Endothelial cell of umbilical vein (primary cell): ENCODE measurements at regions of chr5 and their contacts with region 1.

Region 1: DNA sequence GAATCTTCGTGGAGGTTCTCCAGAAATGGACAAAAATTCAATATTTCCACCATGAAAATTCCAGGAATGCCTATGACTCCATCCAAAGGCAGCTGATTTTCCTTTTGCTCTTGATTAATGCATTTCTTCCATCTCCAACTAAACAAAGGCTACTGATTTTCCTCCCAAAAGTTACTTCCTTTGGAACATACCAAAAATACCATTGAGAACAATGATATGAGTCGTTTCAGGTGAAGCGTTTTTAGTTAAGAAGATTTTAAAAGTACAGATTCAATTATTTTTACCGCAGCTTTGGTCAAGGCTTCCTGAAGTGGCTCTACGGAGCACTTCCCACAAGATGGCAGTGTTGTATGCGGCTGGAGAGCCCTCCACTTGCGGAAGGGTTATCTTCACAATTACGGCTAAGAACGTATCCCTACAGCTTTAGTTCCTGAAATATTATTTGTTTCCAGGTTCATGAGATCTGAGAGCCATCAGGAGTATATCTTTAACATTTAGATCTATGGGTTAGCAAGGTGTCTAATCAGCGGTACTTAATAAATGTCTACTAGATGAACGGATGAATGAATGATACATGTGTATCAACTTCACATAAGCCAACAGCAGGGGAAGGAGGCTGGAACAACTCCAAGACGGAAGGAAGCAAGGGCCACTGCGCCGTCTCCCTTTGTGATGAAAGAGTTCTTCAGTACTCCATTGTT is 35.9 kb upstream of the ARSB start:
- DNase-seq: peak; percentile 80
- H3K4me3 ChIP-seq: peak overlapping the region in 1 of 3 experiments; percentile 40
- H3K27ac ChIP-seq: no peak overlapping the region
- H3K4me1 ChIP-seq: peaks cover 16% of the 10 kb centered on the region
- H3K27me3 ChIP-seq: peaks cover 2 to 14% of the 10 kb centered on the region in 2 experiments
- CTCF ChIP-seq: peak; percentile 73 to 78
- POLR2A ChIP-seq: no peak

Region 2: DNA sequence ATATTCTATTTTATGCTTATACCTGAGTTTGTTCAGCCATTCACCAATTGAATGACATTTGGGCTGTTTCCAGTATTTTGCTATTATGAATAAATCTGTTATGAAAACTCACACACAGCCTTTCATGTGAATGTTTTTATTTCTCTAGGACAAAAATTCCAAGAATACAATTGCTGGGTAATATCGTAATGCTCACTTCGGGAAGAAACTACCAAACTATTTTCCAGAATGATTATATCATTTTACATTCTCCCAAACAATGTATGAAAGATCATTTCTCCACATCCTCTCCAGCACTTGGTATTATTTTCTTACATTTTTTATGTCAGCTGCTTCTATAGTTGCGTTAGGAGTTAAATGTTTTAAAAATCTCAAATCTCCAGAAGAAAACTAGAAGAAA is 314.2 kb before region 1 on chr5:
- CTCF ChIA-PET with region 1: no interaction called
- POLR2A ChIA-PET with region 1: no interaction called
- dilution Hi-C with region 1: no loop called
- intact Hi-C with region 1: no loop called
- DNase-seq: peak; percentile 32
- H3K4me3 ChIP-seq: no peak overlapping the region
- H3K27ac ChIP-seq: no peak overlapping the region
- H3K4me1 ChIP-seq: no peaks in the 10 kb centered on the region
- H3K27me3 ChIP-seq: no peaks in the 10 kb centered on the region
- CTCF ChIP-seq: no peak
- POLR2A ChIP-seq: no peak

Region 3: DNA sequence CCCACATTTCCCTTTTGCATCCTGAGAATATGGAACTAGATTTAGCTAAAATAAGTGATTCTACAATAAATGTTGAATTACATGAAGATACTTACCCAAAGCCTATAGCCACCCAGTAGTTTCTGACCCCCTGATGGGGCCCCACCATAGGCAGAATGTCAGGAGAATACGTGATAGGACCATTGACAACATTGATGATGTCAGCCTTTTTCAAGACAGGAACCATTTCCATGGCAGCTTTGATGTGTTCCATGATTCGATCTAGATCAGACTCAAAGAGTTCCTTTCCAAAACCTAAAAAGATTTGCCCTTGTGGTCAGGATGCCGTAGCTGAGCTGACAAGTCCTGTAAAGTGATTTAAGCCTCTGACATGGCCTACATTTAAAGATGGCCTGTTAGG is 21.2 kb after region 1 on chr5:
- CTCF ChIA-PET with region 1: interaction called, 15 read pairs
- POLR2A ChIA-PET with region 1: no interaction called
- dilution Hi-C with region 1: no loop called
- intact Hi-C with region 1: no loop called
- DNase-seq: no peak
- H3K4me3 ChIP-seq: no peak overlapping the region
- H3K27ac ChIP-seq: no peak overlapping the region
- H3K4me1 ChIP-seq: no peaks in the 10 kb centered on the region
- H3K27me3 ChIP-seq: peaks cover 0 to 4% of the 10 kb centered on the region in 2 experiments
- CTCF ChIP-seq: no peak
- POLR2A ChIP-seq: no peak

Region 4: GRCh38 chr5:79109527-79110492 is 88.8 kb after region 1 on chr5:
- CTCF ChIA-PET with region 1: interaction called, 18 read pairs
- POLR2A ChIA-PET with region 1: no interaction called
- dilution Hi-C with region 1: no loop called
- intact Hi-C with region 1: loop called (anchors 1 kb)
- DNase-seq: no peak
- H3K4me3 ChIP-seq: no peak overlapping the region
- H3K27ac ChIP-seq: no peak overlapping the region
- H3K4me1 ChIP-seq: no peaks in the 10 kb centered on the region
- H3K27me3 ChIP-seq: peaks cover 27 to 43% of the 10 kb centered on the region in 2 experiments
- CTCF ChIP-seq: peak; percentile 19 to 22
- POLR2A ChIP-seq: no peak

Region 5: DNA sequence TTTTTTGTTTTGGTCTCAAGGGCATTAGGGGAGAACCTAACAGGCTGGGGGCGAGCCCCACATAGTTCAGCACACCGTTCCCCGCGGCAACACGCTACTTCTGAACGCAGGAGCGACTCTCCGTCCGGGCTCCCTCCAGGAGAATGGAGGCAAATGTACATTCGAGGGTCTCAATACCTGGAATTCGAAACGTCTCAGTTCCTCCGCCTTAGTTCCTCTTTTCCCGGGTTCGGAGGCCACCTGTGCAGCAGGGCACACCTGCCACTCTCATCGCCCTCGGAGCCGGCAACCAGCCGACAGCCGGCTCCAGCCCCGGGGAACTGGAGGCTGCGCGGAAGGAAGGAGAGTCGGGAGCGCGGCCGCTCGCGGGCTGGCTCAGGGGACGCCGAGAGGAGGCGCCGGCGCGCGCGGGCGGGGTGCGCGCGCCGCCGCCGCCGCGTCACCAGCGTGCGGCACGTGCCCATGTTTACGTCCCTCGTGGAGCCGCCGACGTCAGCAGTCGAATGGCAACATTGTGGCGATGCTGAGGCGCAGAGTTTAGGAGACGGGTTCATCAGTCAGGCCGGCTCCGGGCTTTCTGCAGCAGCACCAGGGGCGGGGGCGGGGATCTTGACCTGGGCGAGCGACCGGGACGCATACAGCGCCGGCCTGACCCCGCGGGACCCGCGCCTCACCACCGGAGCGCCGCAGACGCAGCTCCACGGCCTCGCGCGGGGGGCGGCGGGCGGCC is 214.8 kb after region 1 on chr5 and contains the start of gene JMY:
- CTCF ChIA-PET with region 1: interaction called, 16 read pairs
- POLR2A ChIA-PET with region 1: no interaction called
- dilution Hi-C with region 1: no loop called
- intact Hi-C with region 1: loop called (anchors 5 kb)
- DNase-seq: peak; percentile 81
- H3K4me3 ChIP-seq: peak within 1 kb of the TSS; percentile 36 to 73 (median 64)
- H3K27ac ChIP-seq: peak within 1 kb of the TSS; percentile 54
- H3K4me1 ChIP-seq: peaks cover 10% of the 10 kb centered on the region
- H3K27me3 ChIP-seq: no peaks in the 10 kb centered on the region
- CTCF ChIP-seq: peak in 1 of 2 donors; percentile 22
- POLR2A ChIP-seq: peak; percentile 87
- total RNA-seq, gene JMY: 6.3 and 6.5 TPM in 2 replicates

Region 6: GRCh38 chr5:79318935-79319614 is 298.1 kb after region 1 on chr5:
- CTCF ChIA-PET with region 1: no interaction called
- POLR2A ChIA-PET with region 1: no interaction called
- dilution Hi-C with region 1: no loop called
- intact Hi-C with region 1: no loop called
- DNase-seq: peak; percentile 14
- H3K4me3 ChIP-seq: no peak overlapping the region
- H3K27ac ChIP-seq: no peak overlapping the region
- H3K4me1 ChIP-seq: no peaks in the 10 kb centered on the region
- H3K27me3 ChIP-seq: no peaks in the 10 kb centered on the region
- CTCF ChIP-seq: no peak
- POLR2A ChIP-seq: no peak

Region 7: DNA sequence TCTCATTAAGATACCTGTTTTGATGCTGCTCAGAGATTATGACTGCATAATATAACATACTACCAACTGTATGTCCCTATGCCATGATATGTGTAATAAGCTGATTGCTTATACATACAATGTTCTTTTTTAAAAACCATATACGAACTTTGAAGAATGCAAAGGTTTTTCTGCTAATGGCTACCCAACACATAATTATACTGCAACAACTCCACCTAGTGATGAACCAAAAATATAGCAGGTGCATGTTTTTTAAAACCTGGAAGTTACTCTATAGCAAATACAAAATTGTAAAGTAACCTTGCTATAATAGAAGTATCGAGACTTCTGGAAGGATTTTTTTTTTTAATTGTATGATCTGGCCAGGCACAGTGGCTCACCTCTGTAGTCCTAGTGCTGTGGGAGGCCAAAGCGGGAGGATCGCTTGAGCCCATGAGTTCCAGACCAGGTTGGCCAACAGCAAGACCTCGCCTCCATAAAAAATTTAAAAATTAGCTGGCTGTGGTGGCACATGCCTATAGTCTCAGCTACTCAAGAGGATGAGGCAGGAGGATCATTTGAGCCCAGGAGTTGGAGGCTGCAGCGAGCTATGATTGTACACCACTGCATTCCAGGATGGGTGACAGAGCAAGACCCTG is 443.8 kb after region 1 on chr5:
- CTCF ChIA-PET with region 1: interaction called, 127 read pairs
- POLR2A ChIA-PET with region 1: no interaction called
- dilution Hi-C with region 1: no loop called
- intact Hi-C with region 1: loop called (anchors 1 kb)
- DNase-seq: peak; percentile 38
- H3K4me3 ChIP-seq: no peak overlapping the region
- H3K27ac ChIP-seq: no peak overlapping the region
- H3K4me1 ChIP-seq: no peaks in the 10 kb centered on the region
- H3K27me3 ChIP-seq: no peaks in the 10 kb centered on the region
- CTCF ChIP-seq: peak; percentile 32 to 43
- POLR2A ChIP-seq: no peak

Region 8: DNA sequence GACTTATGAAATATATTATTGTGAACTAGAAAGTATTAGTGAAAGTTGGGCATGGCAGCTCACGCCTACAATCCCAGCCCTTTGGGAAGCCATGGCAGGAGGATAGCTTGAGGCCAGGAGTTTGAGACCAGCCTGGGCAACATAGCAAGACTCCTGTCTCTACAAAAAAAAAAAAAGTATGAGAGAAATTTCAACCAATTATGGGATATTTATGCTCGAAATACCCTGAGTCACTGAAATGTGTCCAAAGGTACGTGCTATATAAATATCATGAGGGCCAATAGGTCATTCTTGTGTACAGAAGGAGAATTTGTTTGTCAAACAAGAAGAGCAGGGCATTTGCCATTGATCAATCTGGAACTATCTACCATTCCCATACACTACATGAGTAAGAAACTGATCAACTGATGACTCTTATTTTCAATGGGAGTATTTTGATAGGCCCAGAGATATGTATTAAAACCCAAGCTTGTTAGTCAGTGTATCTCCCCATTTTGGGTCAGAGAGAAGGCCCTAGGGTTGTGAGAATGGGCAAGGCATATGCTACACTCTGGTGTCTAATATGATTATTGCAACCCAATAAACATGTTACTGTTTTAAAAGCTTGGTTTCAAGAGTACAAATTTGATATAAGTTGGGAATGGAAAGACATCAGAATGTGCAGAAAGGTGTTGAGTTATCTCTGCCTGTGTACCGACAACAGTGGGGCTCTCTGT is 514.6 kb after region 1 on chr5:
- CTCF ChIA-PET with region 1: interaction called, 12 read pairs
- POLR2A ChIA-PET with region 1: no interaction called
- dilution Hi-C with region 1: no loop called
- intact Hi-C with region 1: no loop called
- DNase-seq: no peak
- H3K4me3 ChIP-seq: no peak overlapping the region
- H3K27ac ChIP-seq: no peak overlapping the region
- H3K4me1 ChIP-seq: no peaks in the 10 kb centered on the region
- H3K27me3 ChIP-seq: peaks cover 0 to 8% of the 10 kb centered on the region in 2 experiments
- CTCF ChIP-seq: no peak
- POLR2A ChIP-seq: no peak

Region 9: GRCh38 chr5:80083101-80083890 is 1062.3 kb after region 1 on chr5:
- CTCF ChIA-PET with region 1: interaction called, 115 read pairs
- POLR2A ChIA-PET with region 1: no interaction called
- dilution Hi-C with region 1: no loop called
- intact Hi-C with region 1: loop called (anchors 2 kb)
- DNase-seq: peak; percentile 64
- H3K4me3 ChIP-seq: peak overlapping the region in 1 of 3 experiments; percentile 23
- H3K27ac ChIP-seq: no peak overlapping the region
- H3K4me1 ChIP-seq: no peaks in the 10 kb centered on the region
- H3K27me3 ChIP-seq: no peaks in the 10 kb centered on the region
- CTCF ChIP-seq: peak; percentile 45 to 51
- POLR2A ChIP-seq: no peak